MCF 10A (cell line): ENCODE measurements at regions of chrX and their contacts with region 1.

Region 1: GRCh38 chrX:119145241-119145653 is 17.6 kb upstream of the KIAA1210 start:
- DNase-seq: peak; percentile 43
- H3K4me3 Mint-ChIP-seq: no peak overlapping the region
- H3K27ac Mint-ChIP-seq: no peak overlapping the region
- H3K4me1 Mint-ChIP-seq: no peaks in the 10 kb centered on the region
- H3K27me3 Mint-ChIP-seq: peaks cover 26% of the 10 kb centered on the region
- CTCF ChIP-seq: peak; percentile 43

Region 2: GRCh38 chrX:119721487-119721886 is 576.2 kb after region 1 on chrX:
- CTCF ChIA-PET with region 1: no interaction called
- POLR2A ChIA-PET with region 1: no interaction called
- intact Hi-C with region 1: loop called (anchors 5 kb)
- DNase-seq: no peak
- H3K4me3 Mint-ChIP-seq: no peak overlapping the region
- H3K27ac Mint-ChIP-seq: no peak overlapping the region
- H3K4me1 Mint-ChIP-seq: no peaks in the 10 kb centered on the region
- H3K27me3 Mint-ChIP-seq: peaks cover under 1% of the 10 kb centered on the region
- CTCF ChIP-seq: no peak